ENCODE measurements at regions of chr12 and their contacts with region 1.

Region 1: GRCh38 chr12:106223485-106224354 is 24.1 kb downstream of the CKAP4 start:
- DNase-seq: peak; percentile 68 to 79 (median 74)
- ATAC-seq: peak; percentile 38 to 79 (median 75)
- H3K4me3 ChIP-seq: no peak overlapping the region
- H3K27ac ChIP-seq: no peak overlapping the region
- H3K4me1 ChIP-seq: peaks cover 0 to 19% (median 8%) of the 10 kb centered on the region in 12 donors
- H3K27me3 ChIP-seq: no peaks in the 10 kb centered on the region
- CTCF ChIP-seq: peak; percentile 92 to 98 (median 94)
- POLR2A ChIP-seq: no peak

Region 2: DNA sequence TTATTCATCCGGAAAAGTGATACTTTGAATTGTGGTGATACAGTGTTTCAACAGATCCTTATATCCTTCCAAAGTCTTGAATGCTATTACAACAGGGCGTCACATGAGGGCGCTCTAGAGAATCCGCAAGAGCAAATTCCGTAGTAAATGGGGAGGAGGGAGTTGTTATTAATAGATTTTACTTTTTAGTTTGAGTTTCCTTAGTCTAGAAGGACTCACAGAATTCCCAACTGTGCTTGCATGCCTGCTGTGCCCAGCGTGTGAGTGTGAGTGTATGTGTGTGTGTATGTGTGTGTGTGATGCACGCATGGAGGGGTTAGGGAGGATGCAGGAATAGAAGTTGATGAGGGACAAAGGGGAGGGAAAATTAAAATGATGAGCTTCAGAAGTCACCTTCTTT is 518.0 kb before region 1 on chr12:
- intact Hi-C with region 1: loop called in 1 of 10 experiments (anchors 10 kb)
- DNase-seq: peak in 4 of 5 donors; percentile 32 to 58 (median 46)
- ATAC-seq: peak; percentile 17 to 72 (median 60)
- H3K4me3 ChIP-seq: no peak overlapping the region
- H3K27ac ChIP-seq: peak overlapping the region in 9 of 12 donors; percentile 24 to 61 (median 55)
- H3K4me1 ChIP-seq: peaks cover 0 to 19% (median 11%) of the 10 kb centered on the region in 12 donors
- H3K27me3 ChIP-seq: no peaks in the 10 kb centered on the region
- CTCF ChIP-seq: peak; percentile 72 to 92 (median 86)
- POLR2A ChIP-seq: no peak

Region 3: GRCh38 chr12:106039242-106039641 is 184.5 kb before region 1 on chr12:
- intact Hi-C with region 1: no loop called
- DNase-seq: no peak
- ATAC-seq: peak in 1 of 4 donors; percentile 53
- H3K4me3 ChIP-seq: no peak overlapping the region
- H3K27ac ChIP-seq: no peak overlapping the region
- H3K4me1 ChIP-seq: peaks cover 0 to 4% (median 0%) of the 10 kb centered on the region in 12 donors
- H3K27me3 ChIP-seq: no peaks in the 10 kb centered on the region
- CTCF ChIP-seq: no peak
- POLR2A ChIP-seq: no peak

Region 4: GRCh38 chr12:106282457-106283097 is 58.9 kb after region 1 on chr12:
- intact Hi-C with region 1: loop called in 9 of 10 experiments (anchors 1 to 5 kb)
- DNase-seq: peak in 2 of 5 donors; percentile 34 to 47
- ATAC-seq: peak; percentile 23 to 63 (median 56)
- H3K4me3 ChIP-seq: no peak overlapping the region
- H3K27ac ChIP-seq: no peak overlapping the region
- H3K4me1 ChIP-seq: peaks cover 0 to 22% (median 12%) of the 10 kb centered on the region in 12 donors
- H3K27me3 ChIP-seq: no peaks in the 10 kb centered on the region
- CTCF ChIP-seq: peak; percentile 56 to 76 (median 70)
- POLR2A ChIP-seq: no peak

Region 5: GRCh38 chr12:106417926-106418910 is 194.5 kb after region 1 on chr12:
- intact Hi-C with region 1: no loop called
- DNase-seq: no peak
- ATAC-seq: peak in 2 of 4 donors; percentile 37 to 81
- H3K4me3 ChIP-seq: no peak overlapping the region
- H3K27ac ChIP-seq: peak overlapping the region in 4 of 12 donors; percentile 5 to 22 (median 14)
- H3K4me1 ChIP-seq: peaks cover 0 to 22% (median 10%) of the 10 kb centered on the region in 12 donors
- H3K27me3 ChIP-seq: no peaks in the 10 kb centered on the region
- CTCF ChIP-seq: no peak
- POLR2A ChIP-seq: no peak

Region 6: GRCh38 chr12:106845902-106846301 is 622.2 kb after region 1 on chr12:
- intact Hi-C with region 1: no loop called
- DNase-seq: no peak
- ATAC-seq: no peak
- H3K4me3 ChIP-seq: no peak overlapping the region
- H3K27ac ChIP-seq: no peak overlapping the region
- H3K4me1 ChIP-seq: peaks cover 0 to 16% (median 11%) of the 10 kb centered on the region in 12 donors
- H3K27me3 ChIP-seq: no peaks in the 10 kb centered on the region
- CTCF ChIP-seq: no peak
- POLR2A ChIP-seq: no peak

Measured in heart left ventricle (tissue), 16 donors.